GM10248 (cell line): ENCODE measurements at regions of chr11 and their contacts with region 1.

Region 1: GRCh38 chr11:120303004-120303637 is 22.0 kb upstream of the TLCD5 start:
- DNase-seq: peak; percentile 82
- CTCF ChIP-seq: peak; percentile 92

Region 2: GRCh38 chr11:120172054-120172911 is 130.8 kb before region 1 on chr11:
- CTCF ChIA-PET with region 1: interaction called, 97 read pairs
- POLR2A ChIA-PET with region 1: no interaction called
- DNase-seq: peak; percentile 82
- CTCF ChIP-seq: peak; percentile 74

Region 3: DNA sequence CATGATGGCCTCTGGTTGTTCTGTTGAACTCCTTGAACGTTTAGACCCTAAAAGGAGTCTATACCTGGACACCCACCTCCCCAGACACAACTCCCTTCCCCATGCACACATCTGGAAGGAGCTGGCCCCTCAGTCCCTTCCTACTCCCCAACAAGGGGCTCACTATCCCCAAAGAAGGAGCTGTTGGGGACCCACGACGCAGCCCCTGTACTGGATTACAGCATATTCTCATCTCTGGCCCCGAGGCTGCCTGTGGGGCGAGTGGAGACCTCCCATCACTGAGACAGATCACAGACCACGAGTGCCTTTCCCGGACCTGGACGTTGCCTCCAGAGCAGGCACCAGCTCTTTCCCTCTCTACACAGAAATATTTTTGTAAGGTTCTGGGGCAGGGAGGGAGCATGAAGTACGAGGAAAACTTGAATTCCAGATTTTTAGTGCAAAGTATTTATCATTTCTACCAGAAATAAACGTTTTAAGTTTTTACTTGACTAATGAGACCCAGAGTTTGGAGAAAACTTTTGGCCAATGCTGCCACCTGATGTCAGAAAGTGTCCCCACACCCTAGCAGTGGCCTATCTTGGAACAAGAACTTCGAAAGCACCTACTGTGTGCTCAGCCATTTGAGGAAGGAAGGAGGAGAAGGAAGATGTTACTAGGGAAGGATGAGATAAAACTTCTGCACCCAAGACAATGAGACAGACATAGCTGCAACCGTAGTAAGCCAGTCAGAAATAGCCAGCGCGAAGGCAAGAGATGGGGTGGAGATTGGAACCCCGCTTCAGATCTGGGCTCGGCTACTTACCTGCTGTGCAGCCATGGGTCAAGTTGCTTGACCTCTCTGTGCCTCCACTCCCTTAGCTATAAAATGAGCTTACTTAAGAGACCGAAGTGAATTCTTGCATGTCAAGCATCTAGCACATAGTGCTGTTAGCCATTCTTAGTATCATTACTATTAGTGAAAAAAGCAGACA is 73.4 kb before region 1 on chr11:
- CTCF ChIA-PET with region 1: interaction called, 792 read pairs
- POLR2A ChIA-PET with region 1: no interaction called
- DNase-seq: peak; percentile 52
- CTCF ChIP-seq: peak; percentile 74

Region 4: GRCh38 chr11:120254788-120255518 is 48.2 kb before region 1 on chr11:
- CTCF ChIA-PET with region 1: interaction called, 792 read pairs
- POLR2A ChIA-PET with region 1: no interaction called
- DNase-seq: peak; percentile 68
- CTCF ChIP-seq: no peak

Region 5: DNA sequence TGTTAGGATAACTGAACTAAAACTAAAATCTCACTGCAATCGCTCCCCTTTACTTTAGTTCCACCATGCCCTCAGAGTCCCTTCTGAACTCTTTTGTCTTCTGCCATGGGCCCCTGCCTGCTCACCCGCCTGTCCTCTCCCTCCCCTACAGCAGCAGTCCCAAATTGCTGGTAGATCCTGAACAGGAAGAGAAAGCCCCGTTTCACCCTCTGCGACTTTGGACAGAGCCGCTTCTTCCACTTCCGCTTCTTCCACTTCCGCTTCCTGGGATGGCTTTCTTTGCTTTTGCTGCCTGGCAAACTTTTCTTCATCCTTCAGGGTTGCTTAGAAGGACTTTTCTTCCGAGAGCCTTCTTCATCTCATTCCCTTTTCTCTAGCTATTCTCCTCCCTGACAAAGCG is 13.7 kb before region 1 on chr11:
- CTCF ChIA-PET with region 1: interaction called, 36 read pairs
- POLR2A ChIA-PET with region 1: no interaction called
- DNase-seq: no peak
- CTCF ChIP-seq: no peak

Region 6: GRCh38 chr11:120324932-120325810 is 22.1 kb after region 1 on chr11 and contains the start of gene TLCD5:
- CTCF ChIA-PET with region 1: interaction called, 15 read pairs
- POLR2A ChIA-PET with region 1: no interaction called
- DNase-seq: peak; percentile 75
- CTCF ChIP-seq: peak; percentile 16

Region 7: GRCh38 chr11:120517390-120517761 is 214.3 kb after region 1 on chr11:
- CTCF ChIA-PET with region 1: no interaction called
- POLR2A ChIA-PET with region 1: no interaction called
- DNase-seq: no peak
- CTCF ChIP-seq: no peak